ENCODE measurements at regions of chr2 and their contacts with region 1.

Region 1: DNA sequence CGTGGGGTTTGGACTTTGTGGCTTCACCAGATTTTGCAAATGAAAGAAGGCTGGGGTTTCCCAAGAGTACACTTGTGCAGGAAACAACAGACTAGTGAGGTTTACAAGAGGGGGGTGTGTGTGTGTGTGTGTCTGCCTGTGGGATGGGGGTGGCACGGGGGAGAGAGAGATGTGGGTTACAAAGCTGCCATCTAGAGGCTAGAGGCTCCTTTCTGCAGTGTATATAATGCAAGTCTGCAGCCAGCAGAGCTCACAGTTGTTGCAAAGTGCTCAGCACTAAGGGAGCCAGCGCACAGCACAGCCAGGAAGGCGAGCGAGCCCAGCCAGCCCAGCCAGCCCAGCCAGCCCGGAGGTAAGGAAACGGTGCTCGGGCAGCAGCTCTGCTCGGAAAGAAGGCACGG is at the start of gene ACKR3:
- DNase-seq: peak; percentile 90 to 94
- H3K4me3 ChIP-seq: peak within 1 kb of the TSS; percentile 62 to 74
- H3K27ac ChIP-seq: peak within 1 kb of the TSS; percentile 83 to 97
- H3K4me1 ChIP-seq: peaks cover 0 to 67% (median 30%) of the 10 kb centered on the region in 4 donors
- H3K27me3 ChIP-seq: no peaks in the 10 kb centered on the region
- CTCF ChIP-seq: peak; percentile 26 to 42

Region 2: DNA sequence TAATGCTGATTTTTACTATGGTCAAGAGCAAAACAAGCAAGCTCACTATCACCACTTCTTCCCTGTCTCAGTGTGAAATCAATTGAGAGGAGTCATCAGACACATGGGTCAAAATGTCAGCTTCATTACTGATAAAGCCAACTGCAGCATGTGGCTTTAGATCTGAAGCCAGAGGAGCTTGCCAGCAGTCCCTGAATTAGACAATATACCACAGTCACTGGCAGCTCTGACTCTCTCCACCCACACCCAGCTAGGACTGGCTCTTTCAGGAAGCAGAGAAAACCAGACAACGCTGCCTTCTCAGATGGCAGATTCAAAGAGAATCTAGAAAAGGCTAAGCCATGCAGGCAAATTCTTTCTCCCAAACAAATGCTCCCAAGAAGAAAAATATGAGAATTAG is 285.4 kb before region 1 on chr2:
- intact Hi-C with region 1: no loop called
- DNase-seq: no peak
- H3K4me3 ChIP-seq: no peak overlapping the region
- H3K27ac ChIP-seq: no peak overlapping the region
- H3K4me1 ChIP-seq: no peaks in the 10 kb centered on the region
- H3K27me3 ChIP-seq: peaks cover 0 to 5% of the 10 kb centered on the region in 2 donors
- CTCF ChIP-seq: no peak

Region 3: DNA sequence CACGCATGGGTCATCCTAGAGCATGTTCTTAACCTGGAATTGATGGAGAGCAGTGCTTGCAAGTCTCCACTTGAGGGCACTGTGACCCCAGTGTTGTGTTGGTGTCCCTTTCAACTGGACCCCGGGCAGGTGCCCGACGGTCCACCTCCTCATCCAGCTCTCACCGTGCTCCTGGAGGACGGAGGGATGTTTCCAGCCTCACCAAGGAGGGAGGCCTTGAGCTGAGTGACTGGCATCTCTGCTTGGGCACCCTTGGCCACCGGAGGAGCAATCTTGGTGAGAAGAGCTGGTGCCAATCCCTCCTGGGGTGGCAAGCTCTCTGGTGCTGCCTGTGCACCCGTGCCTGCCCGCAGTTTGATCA is 259.9 kb before region 1 on chr2:
- intact Hi-C with region 1: no loop called
- DNase-seq: no peak
- H3K4me3 ChIP-seq: no peak overlapping the region
- H3K27ac ChIP-seq: no peak overlapping the region
- H3K4me1 ChIP-seq: no peaks in the 10 kb centered on the region
- H3K27me3 ChIP-seq: no peaks in the 10 kb centered on the region
- CTCF ChIP-seq: peak in 1 of 2 experiments; percentile 38

Region 4: GRCh38 chr2:236352761-236353593 is 216.6 kb before region 1 on chr2:
- intact Hi-C with region 1: loop called (anchors 10 kb)
- DNase-seq: no peak
- H3K4me3 ChIP-seq: no peak overlapping the region
- H3K27ac ChIP-seq: no peak overlapping the region
- H3K4me1 ChIP-seq: no peaks in the 10 kb centered on the region
- H3K27me3 ChIP-seq: peaks cover 0 to 4% of the 10 kb centered on the region in 2 donors
- CTCF ChIP-seq: peak; percentile 89 to 92

Region 5: DNA sequence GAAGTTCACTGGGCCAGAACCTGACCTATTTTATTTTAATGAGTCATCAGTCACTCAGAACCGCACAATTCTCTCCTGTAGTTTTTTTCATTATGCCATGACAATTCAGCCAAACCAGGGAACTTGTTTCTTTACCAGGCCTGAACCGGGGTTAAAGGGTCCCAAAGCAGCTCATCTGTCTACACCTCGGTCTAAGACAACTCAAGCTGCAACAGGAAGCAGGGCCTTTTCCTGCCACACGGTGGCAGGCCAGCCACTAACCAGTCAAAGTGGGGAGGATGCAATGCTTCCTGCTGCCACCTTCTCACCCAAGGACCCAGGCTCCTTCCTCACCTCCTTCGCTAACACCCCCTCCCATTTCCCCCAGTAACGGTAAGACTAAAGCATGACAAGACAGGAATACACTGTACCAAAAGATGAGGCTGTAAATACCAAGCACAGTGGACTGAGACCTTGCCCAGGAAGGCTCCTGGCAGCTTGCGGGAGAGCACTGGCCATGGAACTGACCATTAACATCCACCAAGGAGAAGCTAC is 56.6 kb before region 1 on chr2:
- intact Hi-C with region 1: loop called (anchors 5 kb)
- DNase-seq: peak; percentile 66 to 82
- H3K4me3 ChIP-seq: no peak overlapping the region
- H3K27ac ChIP-seq: peak overlapping the region in 1 of 2 donors; percentile 23
- H3K4me1 ChIP-seq: peaks cover 0 to 10% (median 6%) of the 10 kb centered on the region in 4 donors
- H3K27me3 ChIP-seq: no peaks in the 10 kb centered on the region
- CTCF ChIP-seq: peak; percentile 86

Region 6: GRCh38 chr2:236720974-236721540 is 151.5 kb after region 1 on chr2:
- intact Hi-C with region 1: no loop called
- DNase-seq: no peak
- H3K4me3 ChIP-seq: no peak overlapping the region
- H3K27ac ChIP-seq: no peak overlapping the region
- H3K4me1 ChIP-seq: peaks cover 0 to 12% (median 7%) of the 10 kb centered on the region in 4 donors
- H3K27me3 ChIP-seq: no peaks in the 10 kb centered on the region
- CTCF ChIP-seq: no peak